AG04450 (cell line): ENCODE measurements at regions of chr2 and their contacts with region 1.

Region 1: GRCh38 chr2:72150157-72150865 is 2.6 kb upstream of the CYP26B1 start:
- DNase-seq: peak; percentile 29
- H3K4me3 ChIP-seq: peak overlapping the region; percentile 21; the same call in 1 of the 2 replicates
- H3K27ac ChIP-seq: no peak overlapping the region
- H3K27me3 ChIP-seq: peaks cover 83% of the 10 kb centered on the region
- CTCF ChIP-seq: peak; percentile 79

Region 2: DNA sequence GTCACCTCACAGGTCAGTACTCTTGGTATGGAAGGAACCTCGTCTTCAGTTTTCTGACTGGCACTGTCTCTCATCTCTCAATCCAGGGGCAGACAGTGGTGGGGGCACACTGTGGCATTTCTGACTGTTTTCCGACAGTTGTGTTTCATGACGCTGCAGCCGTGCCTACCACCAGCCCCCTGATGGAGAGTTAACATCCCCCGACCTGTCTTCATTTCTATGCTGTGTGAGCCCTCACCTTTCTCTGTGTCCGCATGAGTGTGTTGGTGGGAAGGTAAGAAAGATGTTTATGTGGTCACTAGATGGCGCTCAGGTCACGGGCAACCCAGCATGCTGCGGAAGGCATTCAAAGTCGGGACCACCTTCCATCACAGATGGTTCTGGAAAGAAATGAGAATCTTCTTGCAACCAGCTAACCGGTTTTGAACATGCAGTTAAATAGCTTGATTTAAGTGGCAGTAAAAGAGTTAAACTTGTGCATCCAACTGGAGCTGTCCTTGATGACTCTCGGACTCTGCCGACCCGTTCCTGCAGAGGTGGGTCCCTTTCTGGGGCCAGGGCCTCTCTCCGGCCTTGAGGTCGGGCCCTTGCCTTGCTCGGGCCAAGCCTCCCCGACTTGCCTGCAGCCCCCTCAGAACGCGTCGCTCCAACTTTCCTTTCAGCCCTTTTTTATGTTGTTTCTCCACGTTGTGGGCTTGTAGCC is 604.6 kb before region 1 on chr2:
- CTCF ChIA-PET with region 1: interaction called, 25 read pairs
- POLR2A ChIA-PET with region 1: no interaction called
- DNase-seq: peak; percentile 13
- H3K4me3 ChIP-seq: no peak overlapping the region
- H3K27ac ChIP-seq: no peak overlapping the region
- H3K27me3 ChIP-seq: peaks cover 18% of the 10 kb centered on the region
- CTCF ChIP-seq: peak; percentile 79

Region 3: DNA sequence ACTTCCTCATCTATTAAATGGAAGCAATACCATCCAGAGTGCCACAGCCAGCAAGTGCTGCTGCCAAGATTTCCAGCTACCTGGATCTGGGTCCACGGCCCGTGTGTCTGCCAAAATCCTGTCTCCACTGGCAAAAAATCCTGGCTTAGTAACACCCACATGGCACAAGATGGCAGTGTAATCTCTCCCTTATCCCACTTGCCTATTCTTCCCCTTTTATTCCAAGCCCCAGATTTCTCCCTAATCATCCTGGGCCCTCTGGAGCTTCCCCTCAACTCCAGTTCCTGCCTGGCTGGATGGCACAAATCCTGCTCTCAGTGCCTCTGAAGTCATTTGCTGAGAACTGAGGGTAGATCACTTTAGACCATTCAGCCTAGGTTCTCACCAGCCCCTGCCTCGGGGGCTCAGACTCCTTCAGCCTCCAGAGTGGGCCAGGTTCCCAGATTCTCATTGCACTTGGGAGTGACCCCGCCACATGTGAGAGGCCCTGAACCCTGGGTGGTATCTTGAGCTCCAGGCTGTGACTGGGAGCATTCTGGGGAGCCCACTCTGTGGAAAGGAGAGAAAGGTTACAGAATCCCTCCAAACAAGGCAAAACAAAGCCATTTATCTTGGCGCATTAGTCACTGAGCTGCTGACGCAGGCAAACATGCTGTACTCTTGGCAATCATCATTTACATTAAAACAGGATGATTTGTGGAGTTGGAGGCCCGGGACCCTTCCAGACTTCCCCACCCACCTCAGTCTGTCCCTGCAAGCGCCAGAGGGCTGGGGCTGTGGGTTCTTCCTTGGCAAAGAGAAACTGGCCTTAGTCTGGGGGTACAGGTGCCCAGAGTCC is 371.2 kb before region 1 on chr2:
- CTCF ChIA-PET with region 1: interaction called, 10 read pairs
- POLR2A ChIA-PET with region 1: no interaction called
- DNase-seq: peak; percentile 39
- H3K4me3 ChIP-seq: no peak overlapping the region
- H3K27ac ChIP-seq: peak overlapping the region; percentile 70
- H3K27me3 ChIP-seq: peaks cover 7% of the 10 kb centered on the region
- CTCF ChIP-seq: peak; percentile 45

Region 4: DNA sequence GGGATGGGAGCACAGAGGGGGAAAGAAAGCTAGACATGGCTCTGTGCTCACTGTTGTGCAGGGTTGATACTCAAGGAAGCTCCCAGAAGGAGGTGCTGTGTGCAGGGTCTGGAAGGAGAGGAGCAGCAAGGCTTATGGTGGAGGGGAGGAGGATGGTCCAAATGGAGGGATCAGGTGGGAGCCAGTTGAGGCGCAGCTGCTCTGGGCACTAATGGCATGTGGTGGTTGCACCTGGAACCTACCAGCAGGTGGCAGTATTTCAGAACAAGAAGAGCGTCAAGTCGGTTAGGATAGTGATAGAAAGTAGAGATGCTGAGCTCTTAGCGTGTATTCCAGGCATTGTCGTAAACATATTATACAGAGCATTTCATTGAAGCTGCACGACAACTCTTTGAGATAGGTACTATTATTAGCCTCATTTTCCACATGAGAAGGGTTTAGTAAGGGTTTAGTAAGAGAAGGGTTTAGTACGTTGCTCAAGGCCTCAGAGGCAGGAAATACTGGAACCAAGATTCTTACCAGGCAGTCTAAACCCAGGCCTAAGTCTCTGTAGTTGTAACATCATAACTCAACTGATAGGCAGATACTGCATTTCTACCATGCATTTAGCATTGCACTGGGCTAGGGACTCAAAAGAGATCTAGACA is 226.3 kb before region 1 on chr2:
- CTCF ChIA-PET with region 1: interaction called, 60 read pairs
- POLR2A ChIA-PET with region 1: no interaction called
- DNase-seq: peak; percentile 18
- H3K4me3 ChIP-seq: no peak overlapping the region
- H3K27ac ChIP-seq: no peak overlapping the region
- H3K27me3 ChIP-seq: peaks cover 19% of the 10 kb centered on the region
- CTCF ChIP-seq: peak; percentile 74

Region 5: GRCh38 chr2:72051971-72052505 is 98.3 kb before region 1 on chr2:
- CTCF ChIA-PET with region 1: no interaction called
- POLR2A ChIA-PET with region 1: no interaction called
- DNase-seq: no peak
- H3K4me3 ChIP-seq: no peak overlapping the region
- H3K27ac ChIP-seq: no peak overlapping the region
- H3K27me3 ChIP-seq: no peaks in the 10 kb centered on the region
- CTCF ChIP-seq: no peak

Region 6: GRCh38 chr2:72162574-72162973 is 12.3 kb after region 1 on chr2:
- CTCF ChIA-PET with region 1: interaction called, 22 read pairs
- POLR2A ChIA-PET with region 1: no interaction called
- DNase-seq: no peak
- H3K4me3 ChIP-seq: no peak overlapping the region
- H3K27ac ChIP-seq: no peak overlapping the region
- H3K27me3 ChIP-seq: peaks cover 13% of the 10 kb centered on the region
- CTCF ChIP-seq: no peak

Region 7: GRCh38 chr2:72745679-72746368 is 595.5 kb after region 1 on chr2:
- CTCF ChIA-PET with region 1: interaction called, 24 read pairs
- POLR2A ChIA-PET with region 1: no interaction called
- DNase-seq: peak; percentile 42
- H3K4me3 ChIP-seq: no peak overlapping the region
- H3K27ac ChIP-seq: no peak overlapping the region
- H3K27me3 ChIP-seq: no peaks in the 10 kb centered on the region
- CTCF ChIP-seq: peak; percentile 77